ENCODE measurements at regions of chr17 and their contacts with region 1.

Region 1: DNA sequence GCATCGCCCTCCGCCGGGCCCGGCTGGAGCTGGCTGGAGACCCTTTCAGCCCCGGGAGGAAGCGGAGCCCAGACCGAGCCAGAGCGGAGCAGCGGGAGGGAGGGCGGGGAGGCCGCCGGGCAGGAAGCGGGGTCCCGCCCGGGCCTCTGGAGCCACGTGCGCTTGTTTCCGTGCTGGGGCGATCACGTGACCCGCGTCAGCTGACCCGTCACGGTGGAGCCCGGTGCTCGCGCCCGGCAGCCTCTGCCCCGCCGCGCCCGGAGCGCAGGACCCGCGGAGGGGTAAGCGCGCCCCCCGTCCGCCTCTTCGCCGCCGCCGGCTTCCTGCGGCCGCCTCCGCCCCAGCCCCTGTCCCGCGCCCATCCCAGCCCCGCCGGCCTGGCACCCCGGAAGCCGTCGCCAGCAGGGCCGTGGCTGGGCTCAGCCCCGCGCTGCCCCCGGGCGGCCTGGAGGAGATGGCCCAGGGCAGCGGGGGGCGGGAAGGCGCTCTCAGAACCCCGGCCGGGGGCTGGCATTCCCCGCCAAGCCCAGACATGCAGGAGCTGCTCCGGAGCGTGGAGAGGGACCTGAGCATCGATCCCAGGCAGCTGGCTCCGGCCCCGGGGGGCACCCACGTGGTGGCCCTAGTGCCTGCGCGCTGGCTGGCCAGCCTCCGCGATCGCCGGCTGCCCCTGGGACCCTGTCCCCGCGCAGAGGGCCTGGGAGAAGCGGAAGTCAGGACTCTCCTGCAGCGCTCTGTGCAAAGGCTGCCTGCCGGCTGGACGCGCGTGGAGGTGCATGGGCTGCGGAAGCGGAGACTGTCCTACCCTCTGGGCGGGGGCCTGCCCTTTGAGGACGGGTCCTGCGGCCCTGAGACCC is at the start of gene WDR81:
- DNase-seq: peak; percentile 72 to 89 (median 80)
- ATAC-seq: peak; percentile 84
- H3K4me3 ChIP-seq: peak within 1 kb of the TSS; percentile 70
- H3K4me3 Mint-ChIP-seq: peak within 1 kb of the TSS; percentile 75 to 87 (median 82)
- H3K27ac ChIP-seq: peak within 1 kb of the TSS; percentile 79
- H3K27ac Mint-ChIP-seq: peak within 1 kb of the TSS; percentile 70 to 90 (median 85)
- H3K4me1 ChIP-seq: peaks cover 25 to 33% of the 10 kb centered on the region in 2 donors
- H3K4me1 Mint-ChIP-seq: peaks cover 21 to 55% (median 40%) of the 10 kb centered on the region in 7 donors
- H3K27me3 ChIP-seq: no peaks in the 10 kb centered on the region
- H3K27me3 Mint-ChIP-seq: no peaks in the 10 kb centered on the region
- total RNA-seq, gene WDR81: 30.7 to 55.1 (median 38.3) TPM

Region 2: GRCh38 chr17:1518410-1518809 is 206.3 kb before region 1 on chr17:
- CTCF ChIA-PET with region 1: no interaction called
- POLR2A ChIA-PET with region 1: no interaction called
- intact Hi-C with region 1: no loop called
- DNase-seq: no peak
- ATAC-seq: no peak
- H3K4me3 ChIP-seq: no peak overlapping the region
- H3K4me3 Mint-ChIP-seq: peak overlapping the region; percentile 10 to 93 (median 69)
- H3K27ac ChIP-seq: no peak overlapping the region
- H3K27ac Mint-ChIP-seq: peak overlapping the region in 4 of 9 donors; percentile 59 to 72 (median 66)
- H3K4me1 ChIP-seq: peaks cover 9 to 14% of the 10 kb centered on the region in 2 donors
- H3K4me1 Mint-ChIP-seq: peaks cover 15 to 43% (median 29%) of the 10 kb centered on the region in 7 donors
- H3K27me3 ChIP-seq: no peaks in the 10 kb centered on the region
- H3K27me3 Mint-ChIP-seq: no peaks in the 10 kb centered on the region

Region 3: DNA sequence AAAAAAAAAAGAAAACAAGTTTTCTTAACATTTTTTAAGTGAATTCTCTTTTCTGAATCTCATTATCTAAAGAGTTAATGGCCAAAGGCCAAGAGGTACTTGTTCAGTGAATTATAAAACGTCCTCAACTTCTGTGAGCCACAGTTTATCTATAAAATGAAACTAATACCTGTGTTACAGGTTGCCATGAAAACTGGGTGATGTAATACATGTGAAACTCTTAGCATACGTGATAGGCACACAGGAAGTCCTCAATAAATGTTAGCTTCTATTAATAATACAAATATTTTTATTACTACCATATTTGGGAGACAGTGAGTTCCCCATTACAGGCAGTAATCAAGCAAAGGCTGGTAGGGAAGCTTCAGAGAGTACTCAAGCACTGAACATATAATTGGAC is 194.9 kb before region 1 on chr17:
- CTCF ChIA-PET with region 1: no interaction called
- POLR2A ChIA-PET with region 1: no interaction called
- intact Hi-C with region 1: no loop called
- DNase-seq: no peak
- ATAC-seq: no peak
- H3K4me3 ChIP-seq: no peak overlapping the region
- H3K4me3 Mint-ChIP-seq: no peak overlapping the region
- H3K27ac ChIP-seq: no peak overlapping the region
- H3K27ac Mint-ChIP-seq: peak overlapping the region in 1 of 9 donors; percentile 34
- H3K4me1 ChIP-seq: peaks cover 0 to 16% of the 10 kb centered on the region in 2 donors
- H3K4me1 Mint-ChIP-seq: peaks cover 0 to 23% (median 16%) of the 10 kb centered on the region in 7 donors
- H3K27me3 ChIP-seq: no peaks in the 10 kb centered on the region
- H3K27me3 Mint-ChIP-seq: no peaks in the 10 kb centered on the region

Region 4: GRCh38 chr17:1746975-1747543 is 22.3 kb after region 1 on chr17:
- CTCF ChIA-PET with region 1: no interaction called
- POLR2A ChIA-PET with region 1: no interaction called
- intact Hi-C with region 1: no loop called
- DNase-seq: no peak
- ATAC-seq: no peak
- H3K4me3 ChIP-seq: no peak overlapping the region
- H3K4me3 Mint-ChIP-seq: no peak overlapping the region
- H3K27ac ChIP-seq: no peak overlapping the region
- H3K27ac Mint-ChIP-seq: no peak overlapping the region
- H3K4me1 ChIP-seq: no peaks in the 10 kb centered on the region
- H3K4me1 Mint-ChIP-seq: peaks cover 0 to 3% (median 0%) of the 10 kb centered on the region in 7 donors
- H3K27me3 ChIP-seq: no peaks in the 10 kb centered on the region
- H3K27me3 Mint-ChIP-seq: no peaks in the 10 kb centered on the region

Region 5: GRCh38 chr17:1764284-1764683 is 39.5 kb after region 1 on chr17:
- CTCF ChIA-PET with region 1: interaction called, 9 read pairs
- POLR2A ChIA-PET with region 1: interaction called, 5 read pairs
- intact Hi-C with region 1: loop called (anchors 1 to 5 kb)
- DNase-seq: peak in 7 of 9 donors; percentile 60 to 84 (median 71)
- ATAC-seq: peak; percentile 88
- H3K4me3 ChIP-seq: no peak overlapping the region
- H3K4me3 Mint-ChIP-seq: peak overlapping the region; percentile 50 to 85 (median 70)
- H3K27ac ChIP-seq: peak overlapping the region; percentile 33
- H3K27ac Mint-ChIP-seq: peak overlapping the region; percentile 64 to 92 (median 84)
- H3K4me1 ChIP-seq: peaks cover 19 to 33% of the 10 kb centered on the region in 2 donors
- H3K4me1 Mint-ChIP-seq: peaks cover 22 to 60% (median 35%) of the 10 kb centered on the region in 7 donors
- H3K27me3 ChIP-seq: no peaks in the 10 kb centered on the region
- H3K27me3 Mint-ChIP-seq: peaks cover 0 to under 1% (median 0%) of the 10 kb centered on the region in 5 donors

Region 6: DNA sequence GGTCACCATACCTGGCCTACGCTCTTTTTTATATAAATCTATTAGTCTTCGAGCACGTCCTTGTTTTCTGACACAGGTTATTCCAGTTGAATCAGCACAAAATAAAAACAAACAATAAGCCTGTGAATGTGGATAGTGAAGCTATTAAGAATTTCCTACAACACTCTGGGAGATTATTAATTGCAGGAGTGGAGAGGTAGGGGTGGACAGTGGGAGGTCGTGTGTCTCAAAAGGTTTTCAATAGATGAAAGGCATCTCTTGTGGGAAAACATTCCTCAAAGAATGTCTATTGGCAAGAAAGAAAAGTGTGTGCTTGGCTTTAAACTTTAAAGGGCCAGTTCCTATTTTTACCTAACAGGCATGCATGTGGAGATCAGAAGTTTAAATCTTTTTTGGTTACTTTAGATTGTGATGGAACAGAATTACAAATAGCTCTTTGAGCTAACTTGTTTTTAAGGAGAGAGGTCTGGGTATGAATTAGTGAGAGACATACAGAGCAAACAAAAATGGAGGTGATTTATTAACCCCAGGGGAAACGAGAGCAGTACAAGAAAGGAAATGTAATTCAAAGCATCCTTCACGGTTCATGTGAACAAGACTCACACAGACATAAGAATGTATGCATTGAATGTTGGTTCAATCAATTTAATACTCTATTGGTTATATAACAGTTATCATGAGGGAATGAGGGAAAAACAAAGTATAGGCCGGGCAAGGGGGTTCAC is 96.0 kb after region 1 on chr17:
- CTCF ChIA-PET with region 1: no interaction called
- POLR2A ChIA-PET with region 1: no interaction called
- intact Hi-C with region 1: loop called in 1 of 2 experiments (anchors 2 kb)
- DNase-seq: no peak
- ATAC-seq: no peak
- H3K4me3 ChIP-seq: no peak overlapping the region
- H3K4me3 Mint-ChIP-seq: no peak overlapping the region
- H3K27ac ChIP-seq: no peak overlapping the region
- H3K27ac Mint-ChIP-seq: peak overlapping the region in 3 of 9 donors; percentile 7 to 76 (median 51)
- H3K4me1 ChIP-seq: peaks cover 5 to 13% of the 10 kb centered on the region in 2 donors
- H3K4me1 Mint-ChIP-seq: peaks cover 16 to 36% (median 24%) of the 10 kb centered on the region in 7 donors
- H3K27me3 ChIP-seq: no peaks in the 10 kb centered on the region
- H3K27me3 Mint-ChIP-seq: no peaks in the 10 kb centered on the region

Region 7: GRCh38 chr17:1865252-1866037 is 140.7 kb after region 1 on chr17:
- CTCF ChIA-PET with region 1: interaction called, 9 read pairs
- POLR2A ChIA-PET with region 1: interaction called, 3 read pairs
- intact Hi-C with region 1: loop called (anchors 1 kb)
- DNase-seq: peak; percentile 19 to 71 (median 61)
- ATAC-seq: peak; percentile 86
- H3K4me3 ChIP-seq: no peak overlapping the region
- H3K4me3 Mint-ChIP-seq: no peak overlapping the region
- H3K27ac ChIP-seq: no peak overlapping the region
- H3K27ac Mint-ChIP-seq: no peak overlapping the region
- H3K4me1 ChIP-seq: peaks cover 5 to 10% of the 10 kb centered on the region in 2 donors
- H3K4me1 Mint-ChIP-seq: peaks cover 8 to 35% (median 23%) of the 10 kb centered on the region in 7 donors
- H3K27me3 ChIP-seq: no peaks in the 10 kb centered on the region
- H3K27me3 Mint-ChIP-seq: no peaks in the 10 kb centered on the region

Region 8: DNA sequence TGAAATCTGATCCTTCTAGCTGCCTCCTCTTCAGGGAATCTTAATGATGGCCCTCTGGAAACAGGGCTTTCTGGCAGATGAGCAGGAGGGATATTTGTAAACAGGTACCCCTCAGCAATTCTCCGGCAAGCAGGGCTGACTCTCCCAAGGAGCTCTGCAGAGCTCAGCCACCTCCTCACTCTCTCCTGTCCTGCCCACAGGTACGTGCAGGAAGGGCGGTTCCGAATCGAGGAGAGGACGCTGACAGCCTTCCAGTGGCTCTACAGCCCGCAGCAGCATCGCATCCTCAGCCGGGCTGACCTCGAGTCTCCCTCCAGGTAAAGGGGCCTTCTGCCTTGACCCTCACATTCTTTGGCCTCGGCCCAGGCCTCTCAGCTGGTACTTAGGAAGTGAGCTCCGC is 1045.4 kb after region 1 on chr17:
- CTCF ChIA-PET with region 1: no interaction called
- POLR2A ChIA-PET with region 1: no interaction called
- intact Hi-C with region 1: no loop called
- DNase-seq: no peak
- ATAC-seq: no peak
- H3K4me3 ChIP-seq: no peak overlapping the region
- H3K4me3 Mint-ChIP-seq: no peak overlapping the region
- H3K27ac ChIP-seq: no peak overlapping the region
- H3K27ac Mint-ChIP-seq: no peak overlapping the region
- H3K4me1 ChIP-seq: no peaks in the 10 kb centered on the region
- H3K4me1 Mint-ChIP-seq: no peaks in the 10 kb centered on the region
- H3K27me3 ChIP-seq: no peaks in the 10 kb centered on the region
- H3K27me3 Mint-ChIP-seq: peaks cover 19 to 32% (median 21%) of the 10 kb centered on the region in 5 donors